Heart left ventricle (tissue), 16 donors: ENCODE measurements at regions of chr10 and their contacts with region 1.

Region 1: GRCh38 chr10:84424731-84425167 is 96.4 kb downstream of the CCSER2 start:
- DNase-seq: peak; percentile 76 to 92 (median 89)
- ATAC-seq: peak; percentile 99 to 100 (median 100)
- H3K4me3 ChIP-seq: peak overlapping the region in 11 of 12 donors; percentile 9 to 62 (median 43)
- H3K27ac ChIP-seq: peak overlapping the region; percentile 24 to 93 (median 84)
- H3K4me1 ChIP-seq: peaks cover 2 to 60% (median 37%) of the 10 kb centered on the region in 12 donors
- H3K27me3 ChIP-seq: no peaks in the 10 kb centered on the region
- CTCF ChIP-seq: no peak
- POLR2A ChIP-seq: peak in 1 of 2 donors; percentile 47

Region 2: GRCh38 chr10:84264611-84265141 is 160.1 kb before region 1 on chr10:
- intact Hi-C with region 1: no loop called
- DNase-seq: peak in 4 of 5 donors; percentile 52 to 68 (median 60)
- ATAC-seq: peak; percentile 69 to 95 (median 90)
- H3K4me3 ChIP-seq: no peak overlapping the region
- H3K27ac ChIP-seq: no peak overlapping the region
- H3K4me1 ChIP-seq: peaks cover 0 to 7% (median 2%) of the 10 kb centered on the region in 12 donors
- H3K27me3 ChIP-seq: peaks cover 0 to 13% (median 0%) of the 10 kb centered on the region in 9 donors
- CTCF ChIP-seq: peak; percentile 84 to 96 (median 92)
- POLR2A ChIP-seq: no peak

Region 3: DNA sequence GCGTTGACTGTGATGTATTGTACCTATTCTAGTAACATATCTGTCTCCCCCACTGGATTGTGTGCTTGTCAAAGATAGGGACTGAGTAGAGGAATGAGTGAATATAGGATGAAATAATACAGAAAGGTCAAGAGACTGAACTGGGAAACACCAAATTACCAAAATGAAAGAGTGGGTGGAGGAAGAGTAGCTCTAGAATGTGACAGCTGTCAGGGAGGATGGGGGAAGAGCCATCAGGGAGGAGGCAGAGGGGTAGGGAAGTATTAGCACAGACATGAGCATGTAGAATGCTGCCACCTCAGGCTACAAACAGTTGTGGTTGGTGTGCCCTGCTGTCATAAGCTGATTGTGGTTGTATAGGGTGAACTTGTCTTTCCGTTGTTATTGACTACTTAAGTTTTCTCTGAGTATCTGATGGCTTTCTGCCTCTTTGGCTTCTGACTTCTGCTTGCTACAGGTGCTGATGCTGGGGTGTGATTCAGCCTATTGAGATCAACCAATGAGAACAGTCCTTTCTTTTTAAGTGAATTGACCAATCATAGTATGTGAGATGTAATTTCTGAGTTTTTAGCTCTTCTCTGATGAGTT is 90.8 kb before region 1 on chr10:
- intact Hi-C with region 1: loop called in 1 of 10 experiments (anchors 5 kb)
- DNase-seq: no peak
- ATAC-seq: peak in 1 of 4 donors; percentile 36
- H3K4me3 ChIP-seq: no peak overlapping the region
- H3K27ac ChIP-seq: peak overlapping the region in 1 of 12 donors; percentile 28
- H3K4me1 ChIP-seq: peaks cover 0 to 93% (median 51%) of the 10 kb centered on the region in 12 donors
- H3K27me3 ChIP-seq: no peaks in the 10 kb centered on the region
- CTCF ChIP-seq: no peak
- POLR2A ChIP-seq: no peak

Region 4: GRCh38 chr10:84499846-84500245 is 75.1 kb after region 1 on chr10:
- intact Hi-C with region 1: no loop called
- DNase-seq: no peak
- ATAC-seq: peak in 2 of 4 donors; percentile 36 to 38
- H3K4me3 ChIP-seq: no peak overlapping the region
- H3K27ac ChIP-seq: no peak overlapping the region
- H3K4me1 ChIP-seq: peaks cover 0 to 7% (median 4%) of the 10 kb centered on the region in 12 donors
- H3K27me3 ChIP-seq: no peaks in the 10 kb centered on the region
- CTCF ChIP-seq: no peak
- POLR2A ChIP-seq: no peak

Region 5: DNA sequence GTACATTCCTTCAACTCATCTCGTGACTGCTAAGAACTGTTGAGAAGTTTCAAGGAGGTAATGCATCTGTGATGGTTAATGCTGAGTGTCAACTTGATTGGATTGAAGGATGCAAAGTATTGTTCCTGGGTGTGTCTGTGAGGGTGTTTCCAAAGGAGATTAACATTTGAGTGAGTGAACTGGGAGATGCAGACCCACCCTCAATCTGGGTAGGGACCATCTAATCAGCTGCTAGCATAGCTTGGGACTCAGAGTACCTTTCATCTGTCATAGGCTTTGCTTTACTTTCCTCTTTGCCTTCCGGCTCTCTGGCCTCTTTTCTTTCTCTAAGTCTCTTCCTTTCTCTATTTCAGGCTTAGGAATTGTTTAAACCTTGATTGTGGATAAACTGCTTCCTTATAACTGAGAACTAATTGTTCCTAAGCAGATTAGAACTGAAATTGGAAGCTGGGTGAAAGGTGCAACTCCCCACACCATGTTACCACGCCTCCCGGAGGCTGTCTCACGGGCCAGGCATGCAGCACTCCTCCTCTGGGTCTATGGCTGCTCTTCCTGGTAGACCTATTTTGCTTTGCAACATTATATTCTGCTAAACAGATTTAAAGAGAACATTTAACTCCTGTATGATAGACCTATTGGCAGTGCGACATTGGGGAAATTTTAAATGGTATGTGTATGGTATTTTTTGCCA is 201.8 kb after region 1 on chr10:
- intact Hi-C with region 1: no loop called
- DNase-seq: no peak
- ATAC-seq: no peak
- H3K4me3 ChIP-seq: no peak overlapping the region
- H3K27ac ChIP-seq: no peak overlapping the region
- H3K4me1 ChIP-seq: no peaks in the 10 kb centered on the region
- H3K27me3 ChIP-seq: no peaks in the 10 kb centered on the region
- CTCF ChIP-seq: no peak
- POLR2A ChIP-seq: no peak